ENCODE measurements at regions of chr3 and their contacts with region 1.

Region 1: GRCh38 chr3:122679085-122679881 is 1.4 kb upstream of the PARP14 start:
- DNase-seq: peak; percentile 94
- H3K4me3 Mint-ChIP-seq: peak overlapping the region; percentile 99
- H3K27ac Mint-ChIP-seq: peak overlapping the region; percentile 98
- H3K4me1 Mint-ChIP-seq: peaks cover 56% of the 10 kb centered on the region
- H3K27me3 Mint-ChIP-seq: no peaks in the 10 kb centered on the region

Region 2: DNA sequence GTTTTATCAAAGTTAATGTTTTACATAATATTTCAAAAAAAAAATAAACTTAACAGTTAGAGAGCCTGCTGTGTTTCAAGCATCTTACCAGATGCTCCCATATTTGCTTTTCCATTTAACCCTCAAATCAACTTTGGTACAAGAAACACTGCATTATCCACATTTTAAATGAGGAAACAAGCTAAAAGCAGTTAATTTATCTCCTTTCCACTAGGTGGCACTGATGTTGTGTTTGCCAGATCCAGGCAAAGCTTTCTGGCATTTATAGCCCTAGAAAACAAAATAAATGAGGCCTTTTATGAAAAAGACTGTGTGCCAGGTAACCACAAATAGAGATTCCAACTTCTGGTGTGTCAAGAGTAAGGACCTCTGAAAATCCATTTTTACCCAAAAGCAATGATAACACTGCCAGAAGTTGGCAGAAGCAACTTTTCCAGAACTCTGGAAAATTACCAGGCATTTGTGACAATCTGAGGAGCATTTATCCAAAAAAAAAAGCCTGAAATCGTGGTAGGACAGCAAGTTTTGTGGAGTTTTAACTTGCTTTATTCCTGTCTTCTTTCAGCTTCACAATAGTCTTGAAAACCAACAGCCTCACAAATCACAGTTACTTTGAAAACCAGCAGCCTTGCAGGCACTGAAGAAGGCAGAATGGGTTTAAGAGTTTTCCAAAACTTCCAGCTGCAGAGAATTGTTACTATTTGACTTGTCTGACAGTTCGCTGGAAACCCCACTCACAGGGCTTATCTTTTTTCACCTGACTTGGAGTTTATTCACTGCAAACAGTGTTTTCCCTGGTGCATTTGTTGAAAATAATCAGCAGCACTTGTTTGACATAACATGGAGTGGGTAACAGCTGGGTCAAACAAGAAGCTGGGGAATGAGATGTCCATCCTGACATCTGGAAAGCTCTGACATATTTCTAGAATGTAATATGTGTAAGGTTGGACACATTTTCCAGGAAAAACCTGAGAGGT is 286.1 kb before region 1 on chr3:
- intact Hi-C with region 1: loop called (anchors 2 kb)
- DNase-seq: peak; percentile 72
- H3K4me3 Mint-ChIP-seq: no peak overlapping the region
- H3K27ac Mint-ChIP-seq: no peak overlapping the region
- H3K4me1 Mint-ChIP-seq: peaks cover 49% of the 10 kb centered on the region
- H3K27me3 Mint-ChIP-seq: no peaks in the 10 kb centered on the region

Region 3: GRCh38 chr3:122415720-122416654 is 263.3 kb before region 1 on chr3 and contains the start of gene WDR5B:
- intact Hi-C with region 1: loop called (anchors 1 kb)
- DNase-seq: peak; percentile 99
- H3K4me3 Mint-ChIP-seq: peak within 1 kb of the TSS; percentile 98
- H3K27ac Mint-ChIP-seq: peak within 1 kb of the TSS; percentile 99
- H3K4me1 Mint-ChIP-seq: peaks cover 38% of the 10 kb centered on the region
- H3K27me3 Mint-ChIP-seq: peaks cover 3% of the 10 kb centered on the region
- total RNA-seq, gene WDR5B: 4.8 and 4.9 TPM in 2 replicates

Region 4: DNA sequence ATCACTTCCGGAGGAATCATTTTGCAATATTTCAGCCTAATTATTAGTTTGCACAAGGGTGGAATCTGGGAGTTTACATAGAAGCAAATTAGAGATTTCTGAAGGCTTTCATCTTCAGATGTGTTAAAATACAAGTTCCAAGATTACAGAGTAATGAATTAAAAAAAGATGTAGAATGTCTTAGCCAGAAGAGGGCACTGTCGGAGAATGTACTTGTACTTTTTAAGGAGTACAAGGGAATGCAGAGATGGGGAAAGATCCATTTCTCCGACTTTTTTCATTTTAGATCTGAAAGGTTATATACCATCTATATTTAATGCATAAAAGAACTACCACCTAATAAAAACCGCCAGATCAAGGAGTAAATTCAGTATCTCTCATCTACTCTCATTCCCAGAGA is 220.3 kb before region 1 on chr3:
- intact Hi-C with region 1: loop called (anchors 1 kb)
- DNase-seq: no peak
- H3K4me3 Mint-ChIP-seq: no peak overlapping the region
- H3K27ac Mint-ChIP-seq: no peak overlapping the region
- H3K4me1 Mint-ChIP-seq: peaks cover 2% of the 10 kb centered on the region
- H3K27me3 Mint-ChIP-seq: no peaks in the 10 kb centered on the region

Region 5: DNA sequence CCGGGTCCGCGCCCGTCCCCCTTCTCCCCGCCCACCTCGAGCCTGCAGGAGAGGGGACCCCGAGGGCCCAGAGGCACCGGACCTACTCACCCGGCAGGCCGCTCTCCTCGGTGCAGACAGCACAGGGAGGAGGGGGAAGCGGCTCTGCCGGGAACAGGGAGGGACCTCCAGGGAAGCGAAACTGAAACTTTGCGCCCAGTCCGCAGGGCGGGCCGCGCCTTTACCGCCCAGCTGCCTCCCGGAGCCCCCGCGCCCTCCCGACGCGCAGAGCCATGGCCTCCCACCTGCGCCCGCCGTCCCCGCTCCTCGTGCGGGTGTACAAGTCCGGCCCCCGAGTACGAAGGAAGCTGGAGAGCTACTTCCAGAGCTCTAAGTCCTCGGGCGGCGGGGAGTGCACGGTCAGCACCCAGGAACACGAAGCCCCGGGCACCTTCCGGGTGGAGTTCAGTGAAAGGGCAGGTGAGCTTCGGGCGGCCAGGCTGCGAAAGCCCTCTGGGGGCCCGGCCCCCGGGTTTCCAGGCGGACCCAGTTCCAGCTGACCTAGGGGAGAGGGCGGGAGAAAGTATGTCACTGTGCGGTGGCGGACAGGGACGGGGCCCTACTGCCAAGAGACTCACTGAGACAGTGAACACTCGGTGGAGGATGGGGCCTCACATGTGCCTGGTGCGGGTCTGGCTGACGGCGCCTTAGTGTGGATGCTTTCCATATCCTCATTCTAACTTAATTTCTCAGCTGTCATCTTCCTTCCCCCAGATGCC is 114.9 kb before region 1 on chr3 and contains the starts of genes DTX3L and PARP9:
- intact Hi-C with region 1: loop called (anchors 1 kb)
- DNase-seq: peak; percentile 97
- H3K4me3 Mint-ChIP-seq: peak within 1 kb of the TSS; percentile 95
- H3K27ac Mint-ChIP-seq: peak within 1 kb of the TSS; percentile 98
- H3K4me1 Mint-ChIP-seq: peaks cover 71% of the 10 kb centered on the region
- H3K27me3 Mint-ChIP-seq: no peaks in the 10 kb centered on the region
- total RNA-seq, gene DTX3L: 39.8 and 43.7 TPM in 2 replicates
- total RNA-seq, gene PARP9: 45.7 and 47.9 TPM in 2 replicates

Region 6: DNA sequence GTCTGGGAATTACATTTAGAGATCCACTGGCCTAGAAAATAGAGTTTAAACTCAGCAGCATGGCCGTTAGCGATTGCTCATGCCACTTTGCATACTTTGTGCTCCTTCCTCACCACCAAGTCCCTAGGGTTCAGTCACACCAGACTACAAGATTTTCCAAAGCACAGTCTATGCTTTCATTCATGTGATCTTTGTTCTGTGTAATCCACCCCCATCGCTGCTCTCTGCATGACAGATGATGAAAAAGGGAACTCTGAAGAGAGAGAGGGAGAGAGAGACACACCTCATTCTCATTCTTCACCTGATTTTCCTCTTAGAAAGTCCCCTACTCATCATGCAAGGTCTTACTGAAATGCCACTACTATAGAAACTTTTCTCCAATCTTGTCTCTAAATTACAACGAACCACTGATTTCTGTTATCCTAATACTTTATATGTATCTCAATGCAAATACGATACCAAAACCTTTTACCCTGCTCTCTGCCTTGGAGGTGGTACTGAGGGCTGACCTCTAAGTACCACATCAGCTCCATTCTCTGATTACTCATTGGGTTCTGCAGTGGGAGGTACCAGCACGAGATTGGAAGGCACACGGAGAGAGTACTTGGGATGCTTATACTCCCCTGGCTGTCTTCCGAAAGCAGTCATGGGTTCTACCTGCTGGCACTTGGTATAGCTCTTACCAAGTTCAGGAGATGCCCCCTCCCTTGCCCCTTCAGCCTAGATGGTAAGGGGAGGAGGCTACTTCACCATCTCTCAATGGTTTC is 102.9 kb before region 1 on chr3:
- intact Hi-C with region 1: loop called (anchors 1 kb)
- DNase-seq: peak; percentile 67
- H3K4me3 Mint-ChIP-seq: peak overlapping the region; percentile 1
- H3K27ac Mint-ChIP-seq: peak overlapping the region; percentile 70
- H3K4me1 Mint-ChIP-seq: peaks cover 58% of the 10 kb centered on the region
- H3K27me3 Mint-ChIP-seq: no peaks in the 10 kb centered on the region